HEK293T (cell line): ENCODE measurements at regions of chr3 and their contacts with region 1.

Region 1: GRCh38 chr3:119463171-119464169 is at the start of gene TMEM39A:
- DNase-seq: peak; percentile 99

Region 2: GRCh38 chr3:119293871-119294695 is 169.4 kb before region 1 on chr3 and contains the start of gene ARHGAP31:
- CTCF ChIA-PET with region 1: no interaction called
- POLR2A ChIA-PET with region 1: interaction called, 14 read pairs
- DNase-seq: peak; percentile 58

Region 3: DNA sequence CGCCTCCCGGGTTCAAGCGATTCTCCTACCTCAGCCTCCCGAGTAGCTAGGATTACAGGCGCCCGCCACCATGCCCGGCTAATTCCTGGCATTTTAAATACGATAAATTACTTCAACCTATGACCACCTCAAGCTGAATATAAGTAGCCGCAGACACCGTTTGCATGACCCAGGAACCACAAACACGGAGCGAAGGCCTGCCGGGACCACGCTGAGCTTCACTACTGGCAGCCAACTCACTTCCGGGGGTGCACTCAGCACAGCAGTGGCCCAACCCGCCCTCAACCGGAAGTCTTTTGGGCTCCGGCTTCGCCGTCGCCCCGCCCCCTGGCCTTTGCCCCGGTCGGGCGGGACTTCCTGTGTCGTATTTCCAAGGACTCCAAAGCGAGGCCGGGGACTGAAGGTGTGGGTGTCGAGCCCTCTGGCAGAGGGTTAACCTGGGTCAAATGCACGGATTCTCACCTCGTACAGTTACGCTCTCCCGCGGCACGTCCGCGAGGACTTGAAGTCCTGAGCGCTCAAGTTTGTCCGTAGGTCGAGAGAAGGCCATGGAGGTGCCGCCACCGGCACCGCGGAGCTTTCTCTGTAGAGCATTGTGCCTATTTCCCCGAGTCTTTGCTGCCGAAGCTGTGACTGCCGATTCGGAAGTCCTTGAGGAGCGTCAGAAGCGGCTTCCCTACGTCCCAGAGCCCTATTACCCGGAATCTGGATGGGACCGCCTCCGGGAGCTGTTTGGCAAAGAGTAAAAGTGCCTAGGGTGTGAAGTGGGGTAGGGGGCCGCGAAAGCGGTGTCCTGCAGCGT is 34.9 kb after region 1 on chr3 and contains the start of gene TIMMDC1:
- CTCF ChIA-PET with region 1: no interaction called
- POLR2A ChIA-PET with region 1: interaction called, 39 read pairs
- DNase-seq: peak; percentile 97